Activated CD8-positive, alpha-beta T cell treated with anti-CD3 and anti-CD28 coated beads for 36 hours (primary cell): ENCODE measurements at regions of chr20 and their contacts with region 1.

Region 1: GRCh38 chr20:44683263-44684046 is 31.7 kb upstream of the CCN5 start:
- DNase-seq: peak; percentile 79
- ATAC-seq: peak; percentile 84
- H3K4me3 Mint-ChIP-seq: no peak overlapping the region
- H3K27ac Mint-ChIP-seq: no peak overlapping the region
- H3K4me1 Mint-ChIP-seq: peaks cover 6% of the 10 kb centered on the region
- H3K27me3 Mint-ChIP-seq: peaks cover 2% of the 10 kb centered on the region
- CTCF ChIP-seq: peak; percentile 70

Region 2: GRCh38 chr20:44217342-44218092 is 465.9 kb before region 1 on chr20:
- CTCF ChIA-PET with region 1: interaction called, 10 read pairs
- POLR2A ChIA-PET with region 1: no interaction called
- intact Hi-C with region 1: no loop called
- DNase-seq: peak; percentile 77
- ATAC-seq: peak; percentile 55
- H3K4me3 Mint-ChIP-seq: peak overlapping the region; percentile 50
- H3K27ac Mint-ChIP-seq: peak overlapping the region; percentile 75
- H3K4me1 Mint-ChIP-seq: peaks cover 51% of the 10 kb centered on the region
- H3K27me3 Mint-ChIP-seq: no peaks in the 10 kb centered on the region
- CTCF ChIP-seq: peak; percentile 95

Region 3: DNA sequence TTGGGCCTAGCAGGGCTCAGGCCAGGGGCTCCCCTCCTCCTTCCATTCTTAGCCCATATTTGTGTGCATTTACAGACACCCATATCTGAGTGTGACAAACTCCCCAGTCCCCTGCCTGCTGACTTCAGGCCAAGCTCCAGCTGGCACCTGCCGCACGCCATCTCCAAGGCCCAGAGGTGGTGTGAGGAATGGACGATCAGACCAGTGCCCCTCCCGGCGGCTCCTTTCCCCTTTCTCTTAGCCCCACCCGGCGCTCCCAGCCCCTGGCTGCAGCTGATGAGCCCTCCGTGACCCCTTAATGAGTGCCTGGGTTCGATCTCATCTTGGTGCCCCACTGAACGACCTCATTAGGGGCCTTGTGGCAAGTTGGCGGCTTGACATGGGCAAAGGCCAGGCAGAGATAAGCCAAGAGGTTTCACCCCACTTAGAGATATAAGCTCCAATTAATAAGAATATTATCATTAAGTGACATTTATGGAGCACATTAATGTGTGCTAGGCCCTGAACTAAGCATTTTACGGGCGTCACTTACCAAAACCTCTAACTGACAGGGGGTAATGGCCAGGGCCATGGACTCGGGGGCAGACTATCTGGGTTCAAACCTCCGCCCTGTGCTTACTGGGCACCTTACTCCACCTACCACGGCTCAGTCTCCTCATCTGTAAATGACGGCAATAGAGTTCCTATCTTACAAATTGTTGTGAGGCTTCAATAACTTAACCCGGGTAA is 49.4 kb before region 1 on chr20:
- CTCF ChIA-PET with region 1: interaction called, 12 read pairs
- POLR2A ChIA-PET with region 1: no interaction called
- intact Hi-C with region 1: no loop called
- DNase-seq: no peak
- ATAC-seq: no peak
- H3K4me3 Mint-ChIP-seq: no peak overlapping the region
- H3K27ac Mint-ChIP-seq: no peak overlapping the region
- H3K4me1 Mint-ChIP-seq: peaks cover 7% of the 10 kb centered on the region
- H3K27me3 Mint-ChIP-seq: no peaks in the 10 kb centered on the region
- CTCF ChIP-seq: no peak

Region 4: DNA sequence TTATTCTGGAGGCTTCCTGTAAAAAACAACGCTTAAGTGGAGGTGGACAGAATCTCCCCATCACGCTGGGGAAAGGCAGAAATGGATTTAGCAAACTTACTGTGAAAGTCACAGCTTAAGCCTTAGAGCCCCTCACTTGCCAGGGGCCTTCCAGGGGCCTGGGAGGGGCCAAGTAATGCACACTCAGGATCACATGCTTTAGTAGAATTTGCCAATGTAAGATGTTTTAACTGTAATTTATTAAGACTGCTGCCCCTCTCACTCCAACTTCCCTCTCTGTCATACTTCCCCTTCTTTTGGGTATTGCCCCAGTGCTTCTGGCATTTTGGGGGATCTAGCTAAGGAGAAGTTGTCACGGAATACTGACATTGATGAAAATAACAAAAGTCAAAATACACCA is 19.3 kb before region 1 on chr20:
- CTCF ChIA-PET with region 1: interaction called, 40 read pairs
- POLR2A ChIA-PET with region 1: no interaction called
- intact Hi-C with region 1: no loop called
- DNase-seq: no peak
- ATAC-seq: no peak
- H3K4me3 Mint-ChIP-seq: no peak overlapping the region
- H3K27ac Mint-ChIP-seq: no peak overlapping the region
- H3K4me1 Mint-ChIP-seq: peaks cover 12% of the 10 kb centered on the region
- H3K27me3 Mint-ChIP-seq: no peaks in the 10 kb centered on the region
- CTCF ChIP-seq: no peak

Region 5: GRCh38 chr20:44733341-44734069 is 50.0 kb after region 1 on chr20:
- CTCF ChIA-PET with region 1: interaction called, 118 read pairs
- POLR2A ChIA-PET with region 1: interaction called, 7 read pairs
- intact Hi-C with region 1: loop called (anchors 2 kb)
- DNase-seq: peak; percentile 77
- ATAC-seq: peak; percentile 78
- H3K4me3 Mint-ChIP-seq: no peak overlapping the region
- H3K27ac Mint-ChIP-seq: no peak overlapping the region
- H3K4me1 Mint-ChIP-seq: peaks cover 25% of the 10 kb centered on the region
- H3K27me3 Mint-ChIP-seq: no peaks in the 10 kb centered on the region
- CTCF ChIP-seq: peak; percentile 81

Region 6: GRCh38 chr20:44747166-44748004 is 63.9 kb after region 1 on chr20:
- CTCF ChIA-PET with region 1: interaction called, 57 read pairs
- POLR2A ChIA-PET with region 1: interaction called, 3 read pairs
- intact Hi-C with region 1: no loop called
- DNase-seq: peak; percentile 87
- ATAC-seq: peak; percentile 71
- H3K4me3 Mint-ChIP-seq: peak overlapping the region; percentile 70
- H3K27ac Mint-ChIP-seq: peak overlapping the region; percentile 73
- H3K4me1 Mint-ChIP-seq: peaks cover 8% of the 10 kb centered on the region
- H3K27me3 Mint-ChIP-seq: peaks cover 20% of the 10 kb centered on the region
- CTCF ChIP-seq: peak; percentile 71

Region 7: DNA sequence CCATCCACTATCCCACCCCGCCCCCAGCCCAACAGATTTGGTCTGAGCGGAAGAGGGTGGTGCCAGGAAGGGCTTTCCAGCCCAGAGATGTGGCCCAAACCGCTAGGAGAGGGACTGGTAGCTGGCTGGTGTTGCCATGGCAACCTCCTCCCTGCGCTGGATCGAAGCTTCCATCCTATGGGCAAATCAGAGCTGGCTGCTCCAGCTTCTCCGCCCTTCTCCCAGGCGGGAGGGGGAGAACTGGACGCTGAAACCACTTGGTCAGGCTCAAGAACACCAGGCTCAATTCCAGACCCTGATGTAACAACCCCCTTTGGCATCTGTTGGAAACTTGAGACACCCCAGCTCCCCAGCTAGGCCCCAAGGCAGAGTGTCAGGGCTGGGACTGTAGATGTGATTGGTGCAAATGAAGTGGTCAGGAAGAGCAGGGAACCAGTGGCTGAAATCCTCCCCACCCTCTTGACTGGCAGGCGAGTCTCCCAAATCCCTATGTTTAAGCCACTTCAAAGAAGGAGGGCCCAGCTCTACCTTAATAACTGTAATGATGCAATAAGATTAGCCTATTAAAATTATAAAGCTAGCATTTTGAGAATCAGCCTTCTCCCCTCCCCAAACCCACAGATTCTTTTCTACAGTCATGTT is 122.6 kb after region 1 on chr20:
- CTCF ChIA-PET with region 1: no interaction called
- POLR2A ChIA-PET with region 1: no interaction called
- intact Hi-C with region 1: no loop called
- DNase-seq: no peak
- ATAC-seq: no peak
- H3K4me3 Mint-ChIP-seq: no peak overlapping the region
- H3K27ac Mint-ChIP-seq: no peak overlapping the region
- H3K4me1 Mint-ChIP-seq: no peaks in the 10 kb centered on the region
- H3K27me3 Mint-ChIP-seq: peaks cover 42% of the 10 kb centered on the region
- CTCF ChIP-seq: no peak